ENCODE measurements at regions of chr10 and their contacts with region 1.

Region 1: DNA sequence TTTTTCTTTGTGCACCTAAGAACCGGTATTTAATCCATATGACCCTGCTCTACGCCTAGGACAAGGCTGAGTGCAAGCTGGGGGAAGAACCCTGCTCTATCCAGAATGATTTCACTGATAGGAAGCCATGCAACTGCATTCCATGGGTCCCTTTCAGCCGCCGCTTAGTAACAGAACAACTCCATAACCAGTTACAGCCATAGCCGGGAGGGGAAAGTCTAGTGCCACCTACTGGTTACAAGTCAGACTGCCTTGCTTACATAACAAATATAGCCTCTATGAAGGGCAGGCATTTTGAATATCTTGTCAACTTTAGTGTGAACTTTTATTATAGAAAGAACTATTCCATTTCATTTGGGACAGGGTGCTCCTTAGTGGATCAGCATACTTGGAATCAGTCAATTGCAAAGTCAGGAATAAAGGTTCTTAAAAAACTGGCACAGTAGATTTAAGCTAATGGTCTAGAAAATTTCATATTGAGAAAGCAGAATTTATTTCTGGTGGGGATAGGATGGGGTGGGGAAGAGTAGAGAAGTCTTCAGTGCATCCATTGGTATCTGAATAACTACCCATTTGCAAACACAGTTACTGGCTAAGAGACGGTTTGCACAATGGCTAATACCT is 521.7 kb downstream of the ADRA2A start:
- DNase-seq: peak; percentile 38
- H3K4me3 ChIP-seq: no peak overlapping the region
- H3K27ac ChIP-seq: no peak overlapping the region
- H3K4me1 ChIP-seq: no peaks in the 10 kb centered on the region
- H3K27me3 ChIP-seq: no peaks in the 10 kb centered on the region
- CTCF ChIP-seq: peak; percentile 88 to 96

Region 2: DNA sequence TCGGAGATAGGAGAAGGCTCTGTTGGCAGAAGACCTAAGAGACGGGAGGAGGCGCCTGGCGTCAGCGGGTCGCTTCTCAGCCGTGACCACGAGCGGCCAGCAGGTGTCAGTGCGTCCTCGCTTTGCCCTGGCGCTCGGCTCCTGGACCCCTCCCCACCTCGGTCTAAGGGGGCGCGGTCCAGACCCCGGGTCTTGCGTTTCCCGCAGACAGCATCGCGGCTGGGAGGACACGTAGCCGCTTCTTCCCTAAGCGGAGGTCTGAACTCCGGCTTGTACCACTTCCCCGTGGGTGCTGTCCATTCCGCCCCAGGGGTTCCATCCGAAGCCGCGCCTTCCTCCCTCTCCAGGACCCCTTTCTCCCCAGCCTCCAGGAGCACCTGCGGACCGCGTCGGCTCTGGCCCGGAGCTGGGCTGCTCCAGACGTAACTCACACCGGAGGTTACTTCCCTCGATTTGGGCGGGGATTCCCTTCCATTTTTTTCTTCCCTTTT is 522.3 kb before region 1 on chr10:
- CTCF ChIA-PET with region 1: no interaction called
- dilution Hi-C with region 1: no loop called
- in situ Hi-C with region 1: no loop called
- intact Hi-C with region 1: loop called (anchors 1 kb)
- DNase-seq: peak; percentile 37
- H3K4me3 ChIP-seq: peak overlapping the region; percentile 45 to 56 (median 46)
- H3K27ac ChIP-seq: no peak overlapping the region
- H3K4me1 ChIP-seq: peaks cover 21% of the 10 kb centered on the region
- H3K27me3 ChIP-seq: peaks cover 32% of the 10 kb centered on the region
- CTCF ChIP-seq: peak; percentile 55 to 86

Region 3: DNA sequence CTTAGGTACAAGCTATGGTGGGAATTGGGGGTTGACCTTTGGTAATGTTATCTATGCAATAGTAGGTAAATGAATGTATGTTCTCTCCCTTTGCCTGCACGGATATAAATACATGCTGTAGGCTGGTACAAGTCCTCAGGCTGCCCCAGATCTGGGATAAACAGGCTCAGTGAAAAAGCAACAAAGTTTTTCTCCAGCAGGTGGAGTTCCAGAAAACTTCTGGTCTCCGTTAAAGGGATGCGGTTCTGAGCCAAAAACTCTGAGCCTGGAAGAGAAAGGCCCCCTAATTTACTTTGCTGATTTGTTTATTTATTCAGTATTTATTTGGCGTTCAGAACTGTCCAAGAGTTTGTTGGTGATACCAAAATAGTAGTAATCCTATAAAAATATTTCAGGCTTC is 317.0 kb before region 1 on chr10:
- CTCF ChIA-PET with region 1: no interaction called
- dilution Hi-C with region 1: no loop called
- in situ Hi-C with region 1: no loop called
- intact Hi-C with region 1: loop called (anchors 2 kb)
- DNase-seq: peak; percentile 1
- H3K4me3 ChIP-seq: no peak overlapping the region
- H3K27ac ChIP-seq: no peak overlapping the region
- H3K4me1 ChIP-seq: no peaks in the 10 kb centered on the region
- H3K27me3 ChIP-seq: no peaks in the 10 kb centered on the region
- CTCF ChIP-seq: peak in 1 of 2 donors; percentile 25

Region 4: DNA sequence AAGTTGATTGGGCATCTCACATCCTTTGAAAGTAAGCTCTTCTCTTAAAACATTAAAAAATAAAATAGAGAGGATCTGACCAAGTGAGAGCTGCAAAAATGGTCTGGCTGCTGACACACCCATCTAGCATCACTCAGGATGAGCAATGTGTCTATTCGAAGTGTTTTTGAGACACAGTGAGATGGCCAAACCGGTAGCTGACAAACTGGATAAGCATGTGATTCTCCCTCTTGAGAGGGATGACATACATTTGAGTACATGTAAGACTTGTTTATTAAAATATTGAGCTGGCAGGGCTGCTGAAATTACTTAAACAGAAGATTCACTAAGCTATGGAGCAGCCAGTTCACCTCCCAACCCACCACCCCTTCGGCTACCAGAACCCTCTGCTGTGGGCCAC is 187.8 kb before region 1 on chr10:
- CTCF ChIA-PET with region 1: no interaction called
- dilution Hi-C with region 1: no loop called
- in situ Hi-C with region 1: no loop called
- intact Hi-C with region 1: loop called (anchors 10 kb)
- DNase-seq: no peak
- H3K4me3 ChIP-seq: no peak overlapping the region
- H3K27ac ChIP-seq: no peak overlapping the region
- H3K4me1 ChIP-seq: no peaks in the 10 kb centered on the region
- H3K27me3 ChIP-seq: no peaks in the 10 kb centered on the region
- CTCF ChIP-seq: no peak

Measured in mammary epithelial cell (primary cell).